ENCODE measurements at regions of chr1 and their contacts with region 1.

Region 1: GRCh38 chr1:64906447-64906846 is 59.9 kb downstream of the JAK1 start:
- DNase-seq: no peak
- H3K4me3 Mint-ChIP-seq: peak overlapping the region; percentile 15
- H3K27ac Mint-ChIP-seq: peak overlapping the region; percentile 73
- H3K4me1 Mint-ChIP-seq: peaks cover 26% of the 10 kb centered on the region
- H3K27me3 Mint-ChIP-seq: no peaks in the 10 kb centered on the region

Region 2: GRCh38 chr1:64711266-64711665 is 195.2 kb before region 1 on chr1:
- intact Hi-C with region 1: no loop called
- DNase-seq: no peak
- H3K4me3 Mint-ChIP-seq: no peak overlapping the region
- H3K27ac Mint-ChIP-seq: no peak overlapping the region
- H3K4me1 Mint-ChIP-seq: no peaks in the 10 kb centered on the region
- H3K27me3 Mint-ChIP-seq: peaks cover 7% of the 10 kb centered on the region

Region 3: DNA sequence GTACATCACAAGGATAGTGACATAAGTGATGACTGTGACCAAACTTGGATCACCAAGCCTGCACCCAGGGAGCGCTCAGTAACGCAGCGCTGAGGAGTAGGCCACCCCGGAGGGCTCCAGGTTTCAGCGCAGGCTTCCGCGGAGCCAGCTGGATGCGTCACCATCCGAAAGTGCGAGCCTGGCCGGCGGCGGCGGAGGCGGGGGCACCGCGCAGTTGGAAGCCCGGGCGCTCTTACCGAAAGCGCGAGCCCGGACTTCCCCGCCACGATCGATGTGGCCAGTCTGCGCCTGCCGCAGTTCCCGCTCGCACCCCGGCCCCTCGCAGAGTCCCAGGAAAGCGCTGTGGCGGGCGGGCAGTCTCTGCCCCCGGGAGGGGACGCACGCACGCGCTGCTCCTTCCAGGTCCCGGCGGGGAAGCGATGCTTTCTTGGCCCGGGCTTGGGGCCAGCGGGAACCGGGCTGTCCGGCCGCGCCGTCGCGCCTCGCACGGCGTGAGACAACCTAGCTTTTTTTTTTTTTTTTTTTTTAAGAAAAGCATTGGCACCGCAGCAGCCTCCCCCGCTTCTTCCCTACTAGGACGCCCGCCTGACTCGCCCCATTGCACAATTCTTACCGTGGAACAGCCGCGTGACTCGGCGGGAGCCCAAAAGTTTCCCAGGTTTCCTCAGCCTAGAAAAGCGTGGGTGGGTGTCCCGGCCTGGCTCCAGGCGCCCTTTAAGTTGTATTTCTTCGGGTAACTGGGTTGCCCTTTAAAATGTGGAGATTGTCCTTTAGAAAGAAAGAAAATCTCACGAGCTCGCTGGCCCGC is 96.3 kb after region 1 on chr1:
- intact Hi-C with region 1: loop called (anchors 5 kb)
- DNase-seq: peak; percentile 90
- H3K4me3 Mint-ChIP-seq: peak overlapping the region; percentile 70
- H3K27ac Mint-ChIP-seq: peak overlapping the region; percentile 43
- H3K4me1 Mint-ChIP-seq: peaks cover 23% of the 10 kb centered on the region
- H3K27me3 Mint-ChIP-seq: peaks cover 33% of the 10 kb centered on the region